CD8-positive, alpha-beta T cell (primary cell): ENCODE measurements at regions of chr1 and their contacts with region 1.

Region 1: DNA sequence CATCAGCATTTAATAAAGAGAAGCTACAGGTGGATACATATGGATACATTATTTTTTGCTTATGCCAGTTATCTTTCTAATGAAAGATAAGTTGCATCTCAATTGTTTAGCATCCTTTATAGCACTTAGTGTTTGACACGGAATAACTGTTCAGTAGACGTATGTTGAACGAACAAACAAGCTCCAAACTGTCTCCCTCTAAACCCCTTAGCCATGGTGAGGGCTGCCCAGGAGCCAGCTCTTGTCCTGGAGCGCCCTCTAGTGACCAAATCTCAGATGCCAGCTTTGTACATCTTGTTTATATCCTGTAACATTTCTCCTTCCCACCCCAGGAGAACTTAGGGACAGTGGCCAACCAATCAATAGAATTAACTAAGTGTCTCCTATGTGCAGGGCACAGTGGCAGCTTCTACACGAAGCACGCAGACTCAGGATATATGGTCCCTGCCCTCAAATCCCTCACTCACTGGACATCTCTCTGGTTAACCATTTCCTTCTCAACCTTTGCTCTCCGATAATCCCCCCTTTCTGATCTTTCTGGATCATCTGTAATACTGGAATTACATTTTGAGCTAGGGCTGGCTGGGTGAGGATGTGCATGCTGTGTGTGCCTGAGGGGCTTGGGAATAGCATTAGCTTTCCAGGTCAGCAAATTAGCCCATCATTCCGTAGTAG is 22.9 kb downstream of the KCNA10 start:
- DNase-seq: peak; percentile 58 to 82 (median 77)
- ATAC-seq: peak; percentile 80
- H3K4me3 ChIP-seq: no peak overlapping the region
- H3K4me3 Mint-ChIP-seq: no peak overlapping the region
- H3K27ac ChIP-seq: no peak overlapping the region
- H3K27ac Mint-ChIP-seq: no peak overlapping the region
- H3K4me1 ChIP-seq: no peaks in the 10 kb centered on the region
- H3K4me1 Mint-ChIP-seq: no peaks in the 10 kb centered on the region
- H3K27me3 ChIP-seq: no peaks in the 10 kb centered on the region
- H3K27me3 Mint-ChIP-seq: no peaks in the 10 kb centered on the region
- CTCF ChIP-seq: peak; percentile 78

Region 2: GRCh38 chr1:110312188-110313121 is 183.6 kb before region 1 on chr1:
- CTCF ChIA-PET with region 1: interaction called, 17 read pairs
- POLR2A ChIA-PET with region 1: no interaction called
- intact Hi-C with region 1: no loop called
- DNase-seq: peak; percentile 49 to 85 (median 77)
- ATAC-seq: peak; percentile 99
- H3K4me3 ChIP-seq: no peak overlapping the region
- H3K4me3 Mint-ChIP-seq: no peak overlapping the region
- H3K27ac ChIP-seq: no peak overlapping the region
- H3K27ac Mint-ChIP-seq: no peak overlapping the region
- H3K4me1 ChIP-seq: peaks cover 2% of the 10 kb centered on the region
- H3K4me1 Mint-ChIP-seq: peaks cover 3% of the 10 kb centered on the region
- H3K27me3 ChIP-seq: no peaks in the 10 kb centered on the region
- H3K27me3 Mint-ChIP-seq: no peaks in the 10 kb centered on the region
- CTCF ChIP-seq: peak; percentile 87

Region 3: GRCh38 chr1:110482662-110483307 is 13.3 kb before region 1 on chr1:
- CTCF ChIA-PET with region 1: interaction called, 17 read pairs
- POLR2A ChIA-PET with region 1: no interaction called
- intact Hi-C with region 1: no loop called
- DNase-seq: no peak
- ATAC-seq: no peak
- H3K4me3 ChIP-seq: no peak overlapping the region
- H3K4me3 Mint-ChIP-seq: no peak overlapping the region
- H3K27ac ChIP-seq: no peak overlapping the region
- H3K27ac Mint-ChIP-seq: no peak overlapping the region
- H3K4me1 ChIP-seq: no peaks in the 10 kb centered on the region
- H3K4me1 Mint-ChIP-seq: no peaks in the 10 kb centered on the region
- H3K27me3 ChIP-seq: no peaks in the 10 kb centered on the region
- H3K27me3 Mint-ChIP-seq: peaks cover 22% of the 10 kb centered on the region
- CTCF ChIP-seq: no peak

Region 4: DNA sequence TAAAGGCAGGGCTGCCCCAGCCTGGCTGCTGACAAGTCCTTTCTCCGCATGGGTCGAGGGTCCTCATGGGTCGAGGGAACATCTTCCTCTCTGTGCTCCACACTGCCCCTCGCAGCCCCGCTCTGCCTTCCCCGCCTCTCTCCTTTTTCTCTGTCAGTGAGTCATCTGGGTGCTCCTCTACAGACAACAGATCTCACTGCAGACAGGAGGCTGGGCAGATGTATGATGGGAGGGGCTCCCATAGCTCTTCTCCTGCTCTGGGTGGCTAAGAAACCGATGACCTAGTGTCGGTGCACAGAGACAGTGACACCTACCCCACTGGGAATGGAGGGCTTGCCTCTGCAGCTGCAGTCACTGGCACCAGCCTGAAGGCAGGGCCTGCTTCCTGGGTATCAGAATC is 17.4 kb after region 1 on chr1:
- CTCF ChIA-PET with region 1: interaction called, 25 read pairs
- POLR2A ChIA-PET with region 1: no interaction called
- intact Hi-C with region 1: no loop called
- DNase-seq: no peak
- ATAC-seq: no peak
- H3K4me3 ChIP-seq: no peak overlapping the region
- H3K4me3 Mint-ChIP-seq: no peak overlapping the region
- H3K27ac ChIP-seq: no peak overlapping the region
- H3K27ac Mint-ChIP-seq: no peak overlapping the region
- H3K4me1 ChIP-seq: no peaks in the 10 kb centered on the region
- H3K4me1 Mint-ChIP-seq: no peaks in the 10 kb centered on the region
- H3K27me3 ChIP-seq: no peaks in the 10 kb centered on the region
- H3K27me3 Mint-ChIP-seq: peaks cover 8% of the 10 kb centered on the region
- CTCF ChIP-seq: no peak

Region 5: DNA sequence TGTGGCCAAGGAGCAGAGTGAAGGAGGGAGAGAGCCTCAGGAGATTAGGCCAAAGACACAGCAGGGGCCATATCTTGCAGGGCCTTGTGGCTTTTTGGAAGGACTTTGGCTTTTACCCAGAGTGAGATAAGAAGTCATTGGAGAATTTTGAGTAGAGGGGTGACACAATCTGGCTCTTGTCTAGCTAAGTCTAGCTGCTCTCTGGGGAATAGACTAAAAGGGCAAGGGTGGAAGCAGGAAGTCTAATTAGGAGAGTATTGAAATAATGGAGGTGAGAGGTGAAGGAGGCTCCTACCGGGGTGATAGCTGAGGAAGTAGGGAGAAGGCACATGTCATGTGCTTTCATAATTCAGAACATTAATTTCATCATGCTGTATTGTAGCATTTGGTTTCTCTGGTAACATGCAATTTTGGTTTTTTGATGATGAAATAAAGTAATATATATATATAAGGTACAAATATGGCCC is 212.9 kb after region 1 on chr1:
- CTCF ChIA-PET with region 1: no interaction called
- POLR2A ChIA-PET with region 1: no interaction called
- intact Hi-C with region 1: no loop called
- DNase-seq: no peak
- ATAC-seq: no peak
- H3K4me3 ChIP-seq: no peak overlapping the region
- H3K4me3 Mint-ChIP-seq: no peak overlapping the region
- H3K27ac ChIP-seq: no peak overlapping the region
- H3K27ac Mint-ChIP-seq: no peak overlapping the region
- H3K4me1 ChIP-seq: no peaks in the 10 kb centered on the region
- H3K4me1 Mint-ChIP-seq: peaks cover 18% of the 10 kb centered on the region
- H3K27me3 ChIP-seq: no peaks in the 10 kb centered on the region
- H3K27me3 Mint-ChIP-seq: peaks cover 3% of the 10 kb centered on the region
- CTCF ChIP-seq: no peak

Region 6: GRCh38 chr1:110916669-110917306 is 420.7 kb after region 1 on chr1:
- CTCF ChIA-PET with region 1: no interaction called
- POLR2A ChIA-PET with region 1: no interaction called
- intact Hi-C with region 1: no loop called
- DNase-seq: peak in 3 of 9 experiments; percentile 26 to 49 (median 36)
- ATAC-seq: peak; percentile 69
- H3K4me3 ChIP-seq: no peak overlapping the region
- H3K4me3 Mint-ChIP-seq: no peak overlapping the region
- H3K27ac ChIP-seq: no peak overlapping the region
- H3K27ac Mint-ChIP-seq: no peak overlapping the region
- H3K4me1 ChIP-seq: no peaks in the 10 kb centered on the region
- H3K4me1 Mint-ChIP-seq: peaks cover 10% of the 10 kb centered on the region
- H3K27me3 ChIP-seq: no peaks in the 10 kb centered on the region
- H3K27me3 Mint-ChIP-seq: peaks cover 4% of the 10 kb centered on the region
- CTCF ChIP-seq: no peak